Esophagus muscularis mucosa (tissue), 4 donors: ENCODE measurements at regions of chrX and their contacts with region 1.

Region 1: GRCh38 chrX:132763528-132763927 is 194.9 kb downstream of the HS6ST2 start:
- DNase-seq: no peak
- H3K4me3 ChIP-seq: no peak overlapping the region
- H3K27ac ChIP-seq: no peak overlapping the region
- H3K4me1 ChIP-seq: no peaks in the 10 kb centered on the region
- H3K27me3 ChIP-seq: no peaks in the 10 kb centered on the region
- CTCF ChIP-seq: no peak
- EP300 ChIP-seq: no peak
- POLR2A ChIP-seq: no peak

Region 2: DNA sequence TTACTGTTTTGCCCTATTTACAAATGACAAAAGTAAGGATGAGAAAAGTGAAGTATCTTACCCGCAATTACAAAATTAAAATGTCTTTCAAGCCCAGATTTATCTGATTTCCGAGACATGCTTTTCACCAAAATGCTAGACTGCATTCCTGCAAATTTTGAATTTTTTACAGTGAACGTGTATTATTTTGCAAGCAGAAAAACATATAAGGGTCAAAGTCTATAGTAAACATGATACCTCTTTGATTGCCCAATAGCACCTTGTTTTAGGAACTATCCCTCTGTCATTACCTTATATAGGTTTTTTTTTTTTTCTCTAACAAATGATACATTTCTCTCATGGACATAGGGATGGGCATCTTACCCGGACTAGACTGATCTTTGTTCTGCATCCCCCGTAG is 410.1 kb before region 1 on chrX:
- intact Hi-C with region 1: no loop called
- DNase-seq: no peak
- H3K4me3 ChIP-seq: no peak overlapping the region
- H3K27ac ChIP-seq: no peak overlapping the region
- H3K4me1 ChIP-seq: no peaks in the 10 kb centered on the region
- H3K27me3 ChIP-seq: no peaks in the 10 kb centered on the region
- CTCF ChIP-seq: no peak
- EP300 ChIP-seq: no peak
- POLR2A ChIP-seq: no peak

Region 3: GRCh38 chrX:132786217-132786616 is 22.7 kb after region 1 on chrX:
- intact Hi-C with region 1: no loop called
- DNase-seq: no peak
- H3K4me3 ChIP-seq: no peak overlapping the region
- H3K27ac ChIP-seq: no peak overlapping the region
- H3K4me1 ChIP-seq: no peaks in the 10 kb centered on the region
- H3K27me3 ChIP-seq: no peaks in the 10 kb centered on the region
- CTCF ChIP-seq: no peak
- EP300 ChIP-seq: no peak
- POLR2A ChIP-seq: no peak

Region 4: GRCh38 chrX:132821974-132822633 is 58.6 kb after region 1 on chrX:
- intact Hi-C with region 1: loop called (anchors 10 kb)
- DNase-seq: no peak
- H3K4me3 ChIP-seq: no peak overlapping the region
- H3K27ac ChIP-seq: no peak overlapping the region
- H3K4me1 ChIP-seq: no peaks in the 10 kb centered on the region
- H3K27me3 ChIP-seq: no peaks in the 10 kb centered on the region
- CTCF ChIP-seq: no peak
- EP300 ChIP-seq: no peak
- POLR2A ChIP-seq: no peak

Region 5: DNA sequence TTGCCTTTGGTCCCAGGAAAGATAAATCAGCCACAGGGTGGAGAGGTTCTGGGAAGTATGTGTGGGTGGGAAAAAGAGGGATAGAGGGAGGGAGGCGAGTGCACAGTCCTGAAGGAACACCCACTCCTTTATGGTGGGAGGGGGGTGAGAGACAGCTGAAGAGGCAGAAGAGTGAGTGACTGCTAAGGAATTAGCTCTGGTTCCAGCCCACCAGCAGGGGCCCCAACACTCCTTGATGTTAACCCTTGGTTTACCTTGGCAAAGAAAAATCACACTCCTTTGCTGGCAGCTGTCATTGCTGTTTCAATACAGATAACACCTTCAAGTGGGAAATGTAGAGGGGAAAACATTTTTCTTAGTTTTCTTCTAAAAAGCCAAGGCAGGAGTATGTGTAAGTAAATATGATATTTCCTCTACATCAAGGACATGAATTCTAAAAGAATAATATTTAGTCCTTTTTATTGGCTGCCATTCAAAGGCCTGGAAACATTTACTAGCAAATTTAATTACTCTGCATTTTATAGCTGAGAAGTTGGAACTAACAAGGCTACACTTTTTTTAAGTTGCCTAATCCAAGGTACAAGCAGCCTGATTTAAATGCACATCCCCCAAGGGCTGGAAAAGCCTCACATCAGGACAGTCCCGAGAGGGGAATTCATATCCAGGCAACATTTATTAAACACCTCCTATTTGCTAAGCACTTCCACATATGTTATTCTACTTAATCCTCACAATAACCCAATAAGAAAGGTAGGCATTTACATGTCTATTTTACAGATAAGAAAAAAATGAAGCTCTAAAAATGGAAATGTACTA is 113.2 kb after region 1 on chrX:
- intact Hi-C with region 1: no loop called
- DNase-seq: no peak
- H3K4me3 ChIP-seq: no peak overlapping the region
- H3K27ac ChIP-seq: no peak overlapping the region
- H3K4me1 ChIP-seq: no peaks in the 10 kb centered on the region
- H3K27me3 ChIP-seq: no peaks in the 10 kb centered on the region
- CTCF ChIP-seq: no peak
- EP300 ChIP-seq: no peak
- POLR2A ChIP-seq: no peak